GM12878 (cell line): ENCODE measurements at regions of chr21 and their contacts with region 1.

Region 1: DNA sequence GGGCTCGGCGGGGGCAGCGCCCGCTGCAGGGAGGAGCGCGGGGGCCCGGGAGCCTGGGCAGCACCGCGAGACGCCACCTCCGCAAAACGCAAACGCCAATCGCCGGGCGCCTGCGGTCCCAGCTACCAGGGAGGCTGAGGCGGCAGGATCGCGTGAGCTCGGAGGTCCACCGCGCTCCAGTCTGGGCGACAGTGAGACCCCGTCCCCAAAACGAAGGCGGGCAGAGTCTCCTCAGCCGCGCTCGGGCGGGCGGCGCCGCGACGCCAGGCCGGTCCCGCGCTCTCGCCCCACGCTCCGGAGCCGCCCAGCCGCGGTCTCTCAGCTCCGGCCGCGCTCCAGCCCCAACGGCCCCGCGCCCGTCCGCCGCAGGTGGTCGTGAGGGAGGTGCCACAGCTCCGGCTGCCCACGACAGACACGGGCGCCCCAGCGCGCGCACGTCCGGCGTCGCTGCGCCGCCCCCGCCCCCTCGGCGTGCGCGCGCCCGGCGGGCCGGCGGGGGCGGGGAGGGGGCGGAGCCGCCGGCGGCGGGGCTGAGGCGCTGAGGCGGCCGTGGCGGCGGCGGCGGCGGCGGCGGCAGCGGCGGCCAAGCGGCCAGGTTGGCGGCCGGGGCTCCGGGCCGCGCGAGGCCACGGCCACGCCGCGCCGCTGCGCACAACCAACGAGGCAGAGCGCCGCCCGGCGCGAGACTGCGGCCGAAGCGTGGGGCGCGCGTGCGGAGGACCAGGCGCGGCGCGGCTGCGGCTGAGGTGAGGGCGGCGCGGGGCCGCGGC is at the start of gene ADARB1:
- DNase-seq: no peak
- ATAC-seq: peak; percentile 43
- H3K4me3 ChIP-seq: peak within 1 kb of the TSS; percentile 80; the same call in 1 of the 2 replicates
- H3K27ac ChIP-seq: no peak within 1 kb of the TSS
- H3K4me1 ChIP-seq: 0 out of 2 replicates have a peak, but pooled peaks cover 5% of the 10 kb centered on the region
- H3K27me3 ChIP-seq: peaks cover 0 to 9% of the 10 kb centered on the region in 2 experiments; a peak in 2 of 4 replicates
- CTCF ChIP-seq: no peak
- EP300 ChIP-seq: no peak
- POLR2A ChIP-seq: peak; percentile 76
- RAD21 ChIP-seq: no peak
- polyA plus RNA-seq, gene ADARB1: 5.7 to 9.0 TPM

Region 2: DNA sequence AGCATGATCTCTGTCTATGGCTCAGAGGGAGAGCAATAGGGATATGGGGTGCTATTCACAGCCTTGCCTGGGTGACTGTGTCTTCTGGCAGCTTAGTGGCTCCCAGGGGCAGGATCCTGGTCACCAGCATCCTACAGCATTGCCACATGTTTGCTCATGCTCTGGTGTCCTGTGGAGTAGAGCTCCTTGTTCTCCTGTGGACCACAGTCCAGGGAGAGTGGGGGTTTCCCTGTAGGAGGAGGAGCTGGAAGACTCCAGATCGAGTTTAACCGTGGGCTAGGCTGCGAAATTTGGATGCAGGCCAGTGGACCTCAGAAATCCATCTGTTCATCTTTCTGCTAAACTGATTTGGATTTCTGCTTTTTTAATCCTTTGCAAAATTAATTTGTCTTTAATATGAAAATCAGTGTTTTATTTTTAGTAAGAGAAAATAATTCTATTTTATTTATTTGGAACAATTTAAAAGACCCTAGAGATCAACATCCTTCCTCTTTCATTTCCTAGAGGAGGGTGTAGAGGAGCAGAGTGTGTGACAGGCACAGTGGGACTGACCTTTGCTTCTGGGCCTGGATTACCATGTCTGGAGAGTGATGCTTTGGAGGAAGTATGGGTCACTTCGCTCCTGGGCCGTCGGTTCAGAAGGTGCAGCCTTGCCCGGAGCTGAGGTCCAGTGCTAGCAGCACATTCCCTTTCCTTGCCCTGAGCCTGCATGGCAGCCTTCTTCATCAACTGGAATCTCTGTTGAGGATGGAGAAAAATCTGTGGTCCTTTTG is 17.5 kb after region 1 on chr21:
- CTCF ChIA-PET with region 1: interaction called, 49 read pairs
- POLR2A ChIA-PET with region 1: interaction called, 4 read pairs
- RAD21 ChIA-PET with region 1: interaction called, 6 read pairs
- SMC1A ChIA-PET with region 1: interaction called, 35 read pairs
- in situ Hi-C with region 1: no loop called
- intact Hi-C with region 1: no loop called
- DNase-seq: no peak
- ATAC-seq: no peak; the same call in 2 of the 3 replicates
- H3K4me3 ChIP-seq: no peak overlapping the region
- H3K27ac ChIP-seq: no peak overlapping the region
- H3K4me1 ChIP-seq: no peaks in the 10 kb centered on the region; the same call in 1 of the 2 replicates
- H3K27me3 ChIP-seq: peaks cover 0 to 7% of the 10 kb centered on the region in 2 experiments; a peak in 2 of 4 replicates
- CTCF ChIP-seq: no peak
- EP300 ChIP-seq: no peak
- POLR2A ChIP-seq: no peak
- RAD21 ChIP-seq: no peak

Region 3: DNA sequence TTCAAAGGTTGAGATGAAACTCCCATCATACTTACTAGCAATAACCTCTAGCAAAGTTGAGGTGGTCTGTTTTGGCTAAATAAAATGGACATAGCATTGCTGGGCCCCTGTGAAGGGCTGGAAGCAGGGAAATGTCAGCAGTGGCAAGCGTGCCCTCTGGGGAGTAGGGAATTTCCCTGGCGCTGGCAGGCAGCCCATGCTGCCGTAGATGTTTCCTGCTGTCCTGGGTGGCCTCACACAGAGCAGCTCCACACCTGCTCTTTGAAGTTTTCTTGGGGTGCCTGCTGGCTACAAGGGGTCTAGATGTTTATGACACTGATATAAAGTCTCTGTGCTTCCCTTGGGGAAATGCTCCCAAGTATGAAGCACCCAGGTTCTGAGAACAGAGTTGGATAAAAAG is 30.3 kb after region 1 on chr21:
- CTCF ChIA-PET with region 1: interaction called, 49 read pairs
- POLR2A ChIA-PET with region 1: interaction called, 6 read pairs
- RAD21 ChIA-PET with region 1: interaction called, 6 read pairs
- SMC1A ChIA-PET with region 1: interaction called, 35 read pairs
- in situ Hi-C with region 1: no loop called
- intact Hi-C with region 1: no loop called
- DNase-seq: no peak
- ATAC-seq: peak; percentile 86
- H3K4me3 ChIP-seq: no peak overlapping the region; the same call in 1 of the 2 replicates
- H3K27ac ChIP-seq: no peak overlapping the region
- H3K4me1 ChIP-seq: peaks cover 28% of the 10 kb centered on the region
- H3K27me3 ChIP-seq: no peaks in the 10 kb centered on the region
- CTCF ChIP-seq: no peak
- EP300 ChIP-seq: no peak
- POLR2A ChIP-seq: no peak
- RAD21 ChIP-seq: no peak

Region 4: DNA sequence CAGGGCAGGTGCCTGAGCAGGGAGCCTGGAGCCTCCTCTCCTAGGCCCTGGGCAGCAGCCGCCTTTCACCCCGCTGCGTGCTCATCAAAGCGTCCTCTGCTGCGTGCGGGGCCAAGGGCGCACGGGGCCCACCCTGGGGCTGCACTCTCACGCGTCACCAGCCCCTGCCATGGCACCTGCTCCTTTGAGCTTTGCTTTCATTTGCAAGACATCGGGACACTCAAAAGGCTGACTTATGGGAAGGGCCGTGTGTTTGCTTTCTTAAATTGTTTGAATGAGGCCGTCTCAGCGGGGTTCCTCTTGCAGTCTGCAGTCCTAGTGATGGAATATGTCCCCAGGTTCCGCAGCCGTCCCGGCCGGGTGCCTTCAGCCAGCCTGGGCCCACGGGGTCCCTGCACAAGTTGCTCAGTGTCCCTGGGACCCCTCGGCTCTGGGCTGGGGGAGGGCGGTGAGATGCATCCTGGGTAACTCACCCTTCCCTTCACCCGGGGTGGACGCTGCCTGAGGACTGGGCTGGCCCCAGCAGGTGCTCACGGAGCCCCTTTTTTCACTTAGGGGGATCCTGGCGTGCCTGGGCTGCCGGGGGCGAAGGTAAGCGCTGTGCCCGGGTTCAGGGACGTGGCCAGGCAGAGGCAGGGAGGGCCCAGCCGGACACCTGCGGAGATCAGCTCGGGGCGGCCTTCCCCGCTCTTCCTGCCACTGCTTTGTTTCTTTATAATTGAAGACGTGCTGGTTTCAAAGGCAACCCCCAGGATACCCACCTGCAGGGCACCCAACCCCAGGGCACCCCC is 414.9 kb after region 1 on chr21:
- CTCF ChIA-PET with region 1: no interaction called
- POLR2A ChIA-PET with region 1: no interaction called
- RAD21 ChIA-PET with region 1: no interaction called
- SMC1A ChIA-PET with region 1: no interaction called
- in situ Hi-C with region 1: no loop called
- intact Hi-C with region 1: no loop called
- DNase-seq: no peak
- ATAC-seq: no peak
- H3K4me3 ChIP-seq: no peak overlapping the region
- H3K27ac ChIP-seq: no peak overlapping the region
- H3K4me1 ChIP-seq: no peaks in the 10 kb centered on the region
- H3K27me3 ChIP-seq: no peaks in the 10 kb centered on the region
- CTCF ChIP-seq: no peak
- EP300 ChIP-seq: no peak
- POLR2A ChIP-seq: no peak
- RAD21 ChIP-seq: no peak